Gastrocnemius medialis (tissue), 4 donors: ENCODE measurements at regions of chr6 and their contacts with region 1.

Region 1: DNA sequence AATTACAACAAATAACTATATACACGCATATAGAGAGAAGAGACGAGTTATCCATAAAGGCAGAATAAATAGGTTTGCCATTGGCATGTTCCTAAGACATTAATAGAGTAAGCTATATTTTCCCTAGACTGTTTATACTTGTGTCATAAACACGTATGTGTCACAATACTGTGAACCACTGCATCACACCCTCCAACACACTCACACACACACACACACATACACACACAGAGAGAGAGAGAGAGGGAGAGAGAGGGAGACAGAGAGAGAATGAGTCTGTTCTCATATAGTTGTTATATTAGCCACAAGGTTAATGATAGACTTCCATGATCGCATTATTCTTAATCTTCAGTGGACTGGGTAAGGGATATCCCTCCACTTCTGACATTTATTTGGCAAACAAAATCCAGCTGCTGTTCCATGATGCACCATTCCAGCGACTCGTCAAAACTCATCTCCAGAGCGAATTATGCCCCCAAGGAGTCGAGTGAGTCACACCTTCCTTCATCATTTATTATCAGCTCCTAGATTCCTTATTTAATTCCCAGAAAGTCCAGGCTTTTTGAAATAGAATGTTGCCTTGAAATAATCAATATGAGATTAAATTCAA is 82.8 kb upstream of the HIVEP1 start:
- DNase-seq: no peak
- ATAC-seq: no peak
- H3K4me3 ChIP-seq: no peak overlapping the region
- H3K27ac ChIP-seq: no peak overlapping the region
- H3K4me1 ChIP-seq: no peaks in the 10 kb centered on the region
- H3K27me3 ChIP-seq: no peaks in the 10 kb centered on the region
- CTCF ChIP-seq: no peak
- POLR2A ChIP-seq: no peak

Region 2: GRCh38 chr6:12392490-12392889 is 463.1 kb after region 1 on chr6:
- in situ Hi-C with region 1: no loop called
- intact Hi-C with region 1: loop called (anchors 5 kb)
- DNase-seq: no peak
- ATAC-seq: no peak
- H3K4me3 ChIP-seq: no peak overlapping the region
- H3K27ac ChIP-seq: no peak overlapping the region
- H3K4me1 ChIP-seq: no peaks in the 10 kb centered on the region
- H3K27me3 ChIP-seq: no peaks in the 10 kb centered on the region
- CTCF ChIP-seq: no peak
- POLR2A ChIP-seq: no peak